Ascending aorta (tissue), 2 donors: ENCODE measurements at regions of chr9 and their contacts with region 1.

Region 1: GRCh38 chr9:2919347-2919746 is 75.5 kb upstream of the PUM3 start:
- DNase-seq: no peak
- H3K4me3 ChIP-seq: no peak overlapping the region
- H3K27ac ChIP-seq: no peak overlapping the region
- H3K4me1 ChIP-seq: no peaks in the 10 kb centered on the region
- H3K27me3 ChIP-seq: no peaks in the 10 kb centered on the region
- CTCF ChIP-seq: no peak

Region 2: GRCh38 chr9:2359821-2360505 is 559.4 kb before region 1 on chr9:
- intact Hi-C with region 1: loop called (anchors 10 kb)
- DNase-seq: no peak
- H3K4me3 ChIP-seq: no peak overlapping the region
- H3K27ac ChIP-seq: no peak overlapping the region
- H3K4me1 ChIP-seq: no peaks in the 10 kb centered on the region
- H3K27me3 ChIP-seq: no peaks in the 10 kb centered on the region
- CTCF ChIP-seq: no peak